Heart right ventricle (tissue), 16 donors: ENCODE measurements at regions of chr7 and their contacts with region 1.

Region 1: DNA sequence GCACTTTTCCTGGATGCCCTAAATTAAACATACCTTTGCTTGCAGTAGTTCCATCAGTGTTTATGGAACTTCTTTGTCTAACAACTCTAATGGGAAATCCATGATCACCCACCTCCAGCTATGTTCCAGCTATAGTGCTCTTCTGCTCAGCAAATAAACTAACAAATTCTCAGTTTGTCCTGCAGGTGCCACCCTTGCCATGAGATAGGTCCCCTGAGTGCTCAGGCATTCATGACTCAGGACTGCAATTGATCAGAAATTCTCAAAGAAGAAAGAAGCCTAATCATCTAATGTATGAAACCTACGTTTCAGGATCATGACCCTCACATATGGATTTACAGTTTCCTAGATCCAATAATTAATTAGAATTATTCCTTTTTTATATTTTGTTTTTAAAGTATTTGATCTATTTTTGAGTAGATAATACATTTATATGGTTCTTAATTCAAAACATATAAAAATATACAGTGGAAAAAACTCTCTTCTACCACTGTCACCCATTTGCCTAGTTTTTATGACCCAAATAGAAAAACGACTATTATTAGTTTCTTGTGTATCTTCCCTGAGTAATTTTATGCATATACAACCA is 48.7 kb upstream of the DYNC1I1 start:
- DNase-seq: peak in 1 of 2 donors; percentile 37
- ATAC-seq: peak in 7 of 8 donors; percentile 64 to 87 (median 77)
- H3K4me3 ChIP-seq: no peak overlapping the region
- H3K27ac ChIP-seq: no peak overlapping the region
- H3K4me1 ChIP-seq: no peaks in the 10 kb centered on the region
- H3K27me3 ChIP-seq: peaks cover 0 to 3% (median 0%) of the 10 kb centered on the region in 7 donors
- CTCF ChIP-seq: peak; percentile 18 to 64 (median 46)

Region 2: GRCh38 chr7:94823952-94824351 is 899.7 kb before region 1 on chr7:
- intact Hi-C with region 1: no loop called
- DNase-seq: no peak
- ATAC-seq: no peak
- H3K4me3 ChIP-seq: no peak overlapping the region
- H3K27ac ChIP-seq: no peak overlapping the region
- H3K4me1 ChIP-seq: no peaks in the 10 kb centered on the region
- H3K27me3 ChIP-seq: no peaks in the 10 kb centered on the region
- CTCF ChIP-seq: no peak

Region 3: DNA sequence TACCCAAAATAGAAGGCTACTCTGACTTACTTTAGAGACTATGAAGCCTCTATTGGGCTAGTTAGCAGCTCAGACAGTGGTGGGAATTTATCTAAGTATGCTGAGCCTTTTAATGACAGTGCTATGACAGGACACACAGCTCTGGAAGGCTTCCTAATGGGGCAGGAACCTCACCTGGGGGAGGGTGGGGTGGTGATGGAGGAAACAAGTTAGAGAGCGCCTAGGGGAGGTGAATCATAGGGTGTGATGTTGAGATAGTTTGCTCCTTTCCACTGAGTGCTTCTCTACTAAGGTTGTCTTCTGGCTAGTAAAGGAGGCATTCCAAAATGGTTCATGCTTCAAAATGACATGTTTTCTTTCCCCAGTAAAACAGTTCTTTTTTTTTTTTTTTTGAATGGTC is 774.2 kb before region 1 on chr7:
- intact Hi-C with region 1: loop called in 1 of 10 experiments (anchors 5 kb)
- DNase-seq: no peak
- ATAC-seq: no peak
- H3K4me3 ChIP-seq: no peak overlapping the region
- H3K27ac ChIP-seq: no peak overlapping the region
- H3K4me1 ChIP-seq: no peaks in the 10 kb centered on the region
- H3K27me3 ChIP-seq: no peaks in the 10 kb centered on the region
- CTCF ChIP-seq: no peak

Region 4: GRCh38 chr7:95501261-95501832 is 222.3 kb before region 1 on chr7:
- intact Hi-C with region 1: no loop called
- DNase-seq: no peak
- ATAC-seq: no peak
- H3K4me3 ChIP-seq: no peak overlapping the region
- H3K27ac ChIP-seq: no peak overlapping the region
- H3K4me1 ChIP-seq: no peaks in the 10 kb centered on the region
- H3K27me3 ChIP-seq: no peaks in the 10 kb centered on the region
- CTCF ChIP-seq: no peak

Region 5: GRCh38 chr7:95794917-95795515 is 71.3 kb after region 1 on chr7:
- intact Hi-C with region 1: no loop called
- DNase-seq: no peak
- ATAC-seq: no peak
- H3K4me3 ChIP-seq: no peak overlapping the region
- H3K27ac ChIP-seq: no peak overlapping the region
- H3K4me1 ChIP-seq: no peaks in the 10 kb centered on the region
- H3K27me3 ChIP-seq: no peaks in the 10 kb centered on the region
- CTCF ChIP-seq: peak in 7 of 9 donors; percentile 7 to 47 (median 22)

Region 6: DNA sequence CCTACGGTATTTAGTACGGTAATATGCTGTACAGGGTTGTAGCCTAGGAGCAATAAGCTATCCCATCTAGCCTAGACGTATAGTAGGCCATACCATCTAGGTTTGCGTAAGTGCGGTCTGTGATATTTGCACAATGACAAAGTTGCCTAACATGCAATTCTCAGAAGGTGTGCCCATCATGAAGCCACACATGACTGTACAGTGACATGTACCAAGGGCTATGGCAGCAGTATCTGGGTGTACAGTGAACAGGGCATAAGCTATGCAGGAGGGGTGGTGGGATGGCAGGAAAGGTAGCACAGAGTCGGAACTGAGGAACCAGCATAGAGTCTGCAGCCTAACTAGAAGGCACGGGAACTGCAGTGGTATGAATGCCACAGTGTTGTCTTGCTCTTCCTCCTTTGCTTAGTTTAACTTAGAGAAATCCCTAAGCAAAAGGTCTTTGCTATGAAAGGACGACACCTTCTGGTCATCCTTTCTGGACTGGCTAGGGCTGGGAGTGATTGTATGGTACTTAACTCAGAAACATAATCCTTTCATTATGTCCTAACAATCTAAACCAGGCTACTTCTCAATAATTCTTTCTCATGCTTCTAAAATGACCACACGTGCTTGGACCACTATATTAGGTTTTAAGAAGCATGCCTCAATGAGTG is 142.2 kb after region 1 on chr7:
- intact Hi-C with region 1: loop called in 9 of 10 experiments (anchors 1 to 5 kb)
- DNase-seq: no peak
- ATAC-seq: peak in 1 of 8 donors; percentile 17
- H3K4me3 ChIP-seq: no peak overlapping the region
- H3K27ac ChIP-seq: no peak overlapping the region
- H3K4me1 ChIP-seq: peaks cover 0 to 5% (median 0%) of the 10 kb centered on the region in 9 donors
- H3K27me3 ChIP-seq: no peaks in the 10 kb centered on the region
- CTCF ChIP-seq: peak in 3 of 9 donors; percentile 11 to 23 (median 13)

Region 7: DNA sequence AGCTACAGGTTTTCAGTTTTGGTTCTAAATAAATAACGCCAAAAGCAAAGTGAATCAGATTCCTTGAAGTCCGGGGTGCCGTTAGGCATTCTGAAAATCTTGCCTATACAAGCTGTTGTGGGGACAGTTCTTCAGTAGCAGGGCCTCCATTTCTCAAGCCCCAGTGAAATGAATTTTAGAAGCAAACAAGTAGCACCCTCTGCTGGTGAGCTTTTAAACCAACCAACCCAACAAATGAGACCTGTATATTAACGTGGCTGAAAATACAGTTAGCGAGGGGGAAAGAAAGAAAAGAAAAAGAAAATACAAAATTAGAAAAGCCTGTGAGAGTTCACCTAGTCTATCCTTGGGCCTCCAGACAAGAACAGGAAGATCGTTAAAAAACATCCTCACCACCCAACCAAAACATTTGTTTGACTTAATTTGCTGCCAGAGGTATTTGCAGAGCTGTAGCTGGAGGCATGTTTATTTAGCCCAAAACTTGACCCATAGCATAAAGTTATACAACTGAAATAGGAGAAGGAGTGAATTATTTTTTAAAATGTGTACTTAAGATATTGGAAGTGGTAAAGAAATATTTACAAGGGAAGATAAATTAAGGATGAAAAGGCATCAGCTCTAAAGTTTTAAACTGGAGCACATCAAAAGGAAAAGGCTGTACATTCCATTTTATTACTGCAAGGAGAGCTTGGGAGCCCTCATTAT is 147.5 kb after region 1 on chr7:
- intact Hi-C with region 1: loop called (anchors 1 to 5 kb)
- DNase-seq: peak in 1 of 2 donors; percentile 38
- ATAC-seq: peak in 5 of 8 donors; percentile 57 to 76 (median 68)
- H3K4me3 ChIP-seq: no peak overlapping the region
- H3K27ac ChIP-seq: no peak overlapping the region
- H3K4me1 ChIP-seq: peaks cover 0 to 20% (median 14%) of the 10 kb centered on the region in 9 donors
- H3K27me3 ChIP-seq: no peaks in the 10 kb centered on the region
- CTCF ChIP-seq: peak in 8 of 9 donors; percentile 44 to 75 (median 64)

Region 8: GRCh38 chr7:96061844-96062243 is 338.2 kb after region 1 on chr7:
- intact Hi-C with region 1: no loop called
- DNase-seq: peak in 1 of 2 donors; percentile 15
- ATAC-seq: peak in 1 of 8 donors; percentile 34
- H3K4me3 ChIP-seq: no peak overlapping the region
- H3K27ac ChIP-seq: no peak overlapping the region
- H3K4me1 ChIP-seq: no peaks in the 10 kb centered on the region
- H3K27me3 ChIP-seq: no peaks in the 10 kb centered on the region
- CTCF ChIP-seq: no peak

Region 9: GRCh38 chr7:97064967-97065587 is 1341.4 kb after region 1 on chr7:
- intact Hi-C with region 1: loop called in 2 of 10 experiments (anchors 10 kb)
- DNase-seq: no peak
- ATAC-seq: peak in 4 of 8 donors; percentile 62 to 74 (median 66)
- H3K4me3 ChIP-seq: no peak overlapping the region
- H3K27ac ChIP-seq: no peak overlapping the region
- H3K4me1 ChIP-seq: no peaks in the 10 kb centered on the region
- H3K27me3 ChIP-seq: peaks cover 0 to 5% (median 0%) of the 10 kb centered on the region in 7 donors
- CTCF ChIP-seq: peak; percentile 25 to 83 (median 71)